ENCODE measurements at regions of chr5 and their contacts with region 1.

Region 1: GRCh38 chr5:88729084-88729828 is 153.7 kb downstream of the MEF2C start:
- DNase-seq: no peak
- CTCF ChIP-seq: peak; percentile 68

Region 2: GRCh38 chr5:88826646-88827585 is 97.7 kb after region 1 on chr5:
- in situ Hi-C with region 1: loop called (anchors 10 kb)
- DNase-seq: no peak
- CTCF ChIP-seq: no peak

Region 3: DNA sequence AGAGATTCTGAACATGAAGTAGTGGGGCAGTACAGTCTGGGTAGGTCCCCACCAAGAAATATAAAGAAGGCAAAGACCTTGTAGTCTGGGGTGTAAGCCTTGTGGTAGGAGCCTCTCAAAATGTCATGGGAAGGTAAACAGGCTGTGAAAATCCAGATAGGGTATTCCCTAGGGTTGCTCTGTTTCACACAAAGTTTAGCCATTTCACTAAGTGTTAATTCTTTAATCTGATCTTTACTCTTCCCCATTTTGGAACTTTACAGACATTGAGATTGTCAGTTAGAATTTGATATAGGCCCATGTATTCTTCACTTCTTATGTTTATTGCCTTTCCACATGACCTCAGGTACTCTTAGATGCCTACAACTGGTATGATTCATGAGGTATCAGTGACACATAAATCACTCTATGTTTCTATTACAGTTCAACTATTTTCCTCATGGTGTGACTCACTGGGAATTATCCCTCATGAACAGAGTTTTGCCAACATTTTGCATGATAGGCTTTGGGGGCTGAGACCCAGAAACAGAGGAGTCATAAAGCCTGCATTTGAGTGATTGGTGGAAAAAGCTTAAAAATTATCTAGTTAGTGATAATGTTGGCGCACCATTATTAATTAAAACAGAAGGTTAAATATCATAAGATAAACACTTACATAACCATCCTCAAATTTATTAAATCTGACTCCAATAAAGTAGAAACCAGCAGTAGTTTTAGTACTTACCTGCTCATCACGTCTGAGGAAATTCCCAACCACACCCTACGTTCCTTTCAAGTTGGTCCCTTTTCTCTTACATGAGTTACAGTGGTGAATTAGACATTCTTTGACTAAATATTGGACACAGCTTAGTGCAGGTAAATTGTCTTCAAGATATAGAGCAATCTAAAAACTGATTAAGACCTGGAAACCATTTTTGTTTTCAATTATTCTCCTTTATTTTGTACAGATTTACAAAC is 553.6 kb after region 1 on chr5:
- in situ Hi-C with region 1: loop called (anchors 25 kb)
- DNase-seq: no peak
- CTCF ChIP-seq: no peak

Measured in GM13977 (cell line).